ENCODE measurements at regions of chrX and their contacts with region 1.

Region 1: GRCh38 chrX:100980605-100981497 is 11.3 kb downstream of the ARL13A start:
- DNase-seq: peak; percentile 85
- H3K4me3 Mint-ChIP-seq: no peak overlapping the region
- H3K27ac Mint-ChIP-seq: peak overlapping the region; percentile 83
- H3K4me1 Mint-ChIP-seq: peaks cover 19% of the 10 kb centered on the region
- H3K27me3 Mint-ChIP-seq: no peaks in the 10 kb centered on the region
- CTCF ChIP-seq: no peak

Region 2: GRCh38 chrX:100745798-100746537 is 234.9 kb before region 1 on chrX:
- CTCF ChIA-PET with region 1: no interaction called
- intact Hi-C with region 1: no loop called
- DNase-seq: no peak
- H3K4me3 Mint-ChIP-seq: no peak overlapping the region
- H3K27ac Mint-ChIP-seq: no peak overlapping the region
- H3K4me1 Mint-ChIP-seq: peaks cover 13% of the 10 kb centered on the region
- H3K27me3 Mint-ChIP-seq: no peaks in the 10 kb centered on the region
- CTCF ChIP-seq: no peak

Region 3: DNA sequence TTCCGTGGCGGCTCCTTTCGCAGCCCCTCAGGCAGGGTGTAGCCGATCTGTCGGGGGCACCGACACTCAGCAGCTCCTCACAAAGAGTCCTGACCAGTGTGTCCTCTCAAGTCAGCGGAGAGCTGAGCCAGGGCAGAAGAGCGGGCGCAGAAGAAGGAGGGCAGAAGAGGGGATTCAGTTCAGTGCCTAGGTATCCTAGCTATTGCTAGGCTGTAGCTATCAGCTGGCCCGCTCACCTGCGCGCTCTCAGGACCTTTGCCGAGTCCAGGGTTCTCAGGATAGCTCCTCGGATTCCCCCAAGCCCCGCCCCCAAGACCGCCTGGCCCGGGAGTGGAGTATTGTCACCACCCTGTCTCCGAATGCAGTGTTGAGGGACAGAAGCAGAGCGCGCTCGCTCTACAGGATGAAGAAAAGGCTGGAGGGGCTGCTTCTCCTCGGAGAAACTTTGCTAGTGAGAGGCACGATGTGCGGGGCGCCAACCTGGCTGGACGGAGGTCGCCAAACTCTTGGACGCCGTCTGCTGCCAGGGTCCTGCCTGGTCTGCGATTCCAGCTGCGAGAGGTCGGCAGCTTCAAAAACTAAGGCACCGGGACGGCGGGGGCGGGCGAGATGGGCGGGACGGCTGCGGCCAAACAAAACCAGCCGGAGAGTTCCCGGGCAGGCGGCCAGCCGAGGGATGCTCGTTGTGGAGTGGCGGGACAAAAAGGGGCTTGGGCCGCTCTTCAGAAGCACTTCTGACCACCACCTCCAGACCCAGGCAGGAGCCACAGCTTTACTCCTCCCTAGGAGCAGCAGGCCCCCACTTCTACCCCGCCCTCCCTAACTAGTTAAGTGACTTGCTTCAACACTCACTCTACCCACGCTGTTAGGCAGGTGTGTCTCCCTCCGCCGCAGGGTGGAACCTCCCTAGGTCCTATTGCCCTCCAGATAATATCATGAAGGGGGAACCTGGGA is 51.9 kb before region 1 on chrX and contains the start of gene XKRX:
- CTCF ChIA-PET with region 1: no interaction called
- intact Hi-C with region 1: loop called (anchors 1 kb)
- DNase-seq: peak; percentile 53
- H3K4me3 Mint-ChIP-seq: peak within 1 kb of the TSS; percentile 80
- H3K27ac Mint-ChIP-seq: no peak within 1 kb of the TSS
- H3K4me1 Mint-ChIP-seq: no peaks in the 10 kb centered on the region
- H3K27me3 Mint-ChIP-seq: no peaks in the 10 kb centered on the region
- CTCF ChIP-seq: no peak
- total RNA-seq, gene XKRX: 0.33 and 0.83 TPM in 2 replicates

Region 4: GRCh38 chrX:101091817-101092216 is 111.0 kb after region 1 on chrX:
- CTCF ChIA-PET with region 1: no interaction called
- intact Hi-C with region 1: no loop called
- DNase-seq: no peak
- H3K4me3 Mint-ChIP-seq: no peak overlapping the region
- H3K27ac Mint-ChIP-seq: no peak overlapping the region
- H3K4me1 Mint-ChIP-seq: no peaks in the 10 kb centered on the region
- H3K27me3 Mint-ChIP-seq: no peaks in the 10 kb centered on the region
- CTCF ChIP-seq: no peak

Region 5: GRCh38 chrX:101119388-101119787 is 138.5 kb after region 1 on chrX:
- CTCF ChIA-PET with region 1: no interaction called
- intact Hi-C with region 1: no loop called
- DNase-seq: no peak
- H3K4me3 Mint-ChIP-seq: no peak overlapping the region
- H3K27ac Mint-ChIP-seq: no peak overlapping the region
- H3K4me1 Mint-ChIP-seq: no peaks in the 10 kb centered on the region
- H3K27me3 Mint-ChIP-seq: no peaks in the 10 kb centered on the region
- CTCF ChIP-seq: no peak

Region 6: GRCh38 chrX:101136235-101136634 is 155.4 kb after region 1 on chrX:
- CTCF ChIA-PET with region 1: no interaction called
- intact Hi-C with region 1: no loop called
- DNase-seq: no peak
- H3K4me3 Mint-ChIP-seq: no peak overlapping the region
- H3K27ac Mint-ChIP-seq: no peak overlapping the region
- H3K4me1 Mint-ChIP-seq: no peaks in the 10 kb centered on the region
- H3K27me3 Mint-ChIP-seq: no peaks in the 10 kb centered on the region
- CTCF ChIP-seq: no peak

Measured in Calu3 (cell line).